CD14-positive monocyte (primary cell): ENCODE measurements at regions of chr1 and their contacts with region 1.

Region 1: DNA sequence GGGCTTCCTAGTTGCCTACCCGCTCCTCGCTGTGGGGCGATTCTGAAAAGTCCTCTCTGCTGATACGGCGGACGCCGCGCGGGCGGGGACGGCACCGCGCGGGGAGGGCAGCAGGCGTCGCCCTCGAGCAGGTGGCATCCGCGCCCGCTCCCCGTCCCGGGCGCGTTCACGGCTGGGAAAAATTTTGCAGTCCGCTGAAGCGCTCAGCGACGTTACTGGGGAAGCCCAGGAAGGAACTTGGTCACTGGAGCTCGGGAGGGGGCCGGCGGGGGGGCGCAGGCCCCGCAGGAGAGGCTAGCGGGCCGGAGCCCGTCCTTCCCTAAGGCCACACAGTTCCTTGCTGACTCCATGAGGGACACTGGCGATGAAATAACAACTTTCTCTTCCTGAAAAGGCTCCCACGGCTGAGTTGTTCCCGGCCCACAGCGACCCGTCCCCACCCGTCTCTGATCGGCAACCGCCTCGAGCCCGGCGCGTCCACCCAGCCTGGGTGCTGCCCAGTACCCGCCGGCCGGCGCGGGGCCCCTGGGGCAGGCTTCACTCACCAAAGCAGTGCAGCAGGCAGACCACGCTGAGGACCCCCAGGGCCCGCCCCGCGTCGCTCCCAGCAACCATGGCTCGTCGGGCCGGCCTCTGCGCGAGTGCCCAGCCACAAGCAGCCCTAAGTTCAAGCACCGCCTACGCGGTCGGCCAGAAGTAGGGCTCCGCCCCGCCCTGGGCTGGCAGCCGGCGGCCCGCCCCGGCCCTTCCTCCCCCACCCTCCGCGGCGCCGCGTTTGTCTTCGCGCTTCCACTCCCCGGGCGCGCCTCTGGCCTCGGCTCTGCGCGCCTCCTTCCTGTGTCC is at the start of gene CD58:
- DNase-seq: peak; percentile 89 to 95 (median 90)
- H3K4me3 ChIP-seq: peak within 1 kb of the TSS; percentile 73 to 84 (median 83)
- H3K4me3 Mint-ChIP-seq: peak within 1 kb of the TSS; percentile 98 to 100
- H3K27ac ChIP-seq: peak within 1 kb of the TSS; percentile 97
- H3K27ac Mint-ChIP-seq: peak within 1 kb of the TSS; percentile 94 to 98 (median 96)
- H3K4me1 ChIP-seq: peaks cover 32 to 57% of the 10 kb centered on the region in 2 donors
- H3K4me1 Mint-ChIP-seq: peaks cover 60% of the 10 kb centered on the region
- H3K27me3 ChIP-seq: no peaks in the 10 kb centered on the region
- H3K27me3 Mint-ChIP-seq: peaks cover 0 to 7% (median 4%) of the 10 kb centered on the region in 3 donors
- CTCF ChIP-seq: peak; percentile 81
- polyA plus RNA-seq, gene CD58: 81.0 to 168 (median 128) TPM

Region 2: GRCh38 chr1:116514708-116515525 is 55.7 kb before region 1 on chr1:
- intact Hi-C with region 1: loop called in 1 of 2 experiments (anchors 2 kb)
- DNase-seq: peak; percentile 97 to 98 (median 98)
- H3K4me3 ChIP-seq: peak overlapping the region in 1 of 3 experiments; percentile 53
- H3K4me3 Mint-ChIP-seq: peak overlapping the region; percentile 60 to 76
- H3K27ac ChIP-seq: peak overlapping the region; percentile 92 to 98
- H3K27ac Mint-ChIP-seq: peak overlapping the region; percentile 99 to 100 (median 100)
- H3K4me1 ChIP-seq: peaks cover 38 to 49% of the 10 kb centered on the region in 2 donors
- H3K4me1 Mint-ChIP-seq: peaks cover 63% of the 10 kb centered on the region
- H3K27me3 ChIP-seq: no peaks in the 10 kb centered on the region
- H3K27me3 Mint-ChIP-seq: peaks cover 0 to 5% (median 0%) of the 10 kb centered on the region in 3 donors
- CTCF ChIP-seq: no peak

Region 3: DNA sequence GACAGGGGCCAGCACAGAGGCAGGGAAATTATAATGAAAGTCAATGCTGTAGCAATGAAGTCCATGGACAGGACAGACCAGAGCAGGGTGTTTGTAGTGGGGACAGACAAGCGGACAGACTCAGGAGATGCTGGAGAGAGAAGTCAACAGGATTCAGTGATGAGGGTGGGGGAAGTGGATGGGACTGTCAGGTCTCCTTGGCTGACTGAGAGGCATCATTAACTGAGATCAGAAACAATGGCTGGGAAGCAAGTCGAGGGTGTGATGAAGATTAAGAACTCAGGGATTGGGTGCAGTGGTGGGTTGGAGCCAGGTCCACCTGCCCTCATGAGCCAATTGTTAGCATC is 25.2 kb before region 1 on chr1:
- intact Hi-C with region 1: no loop called
- DNase-seq: no peak
- H3K4me3 ChIP-seq: no peak overlapping the region
- H3K4me3 Mint-ChIP-seq: peak overlapping the region in 1 of 2 donors; percentile 25
- H3K27ac ChIP-seq: peak overlapping the region in 1 of 2 donors; percentile 59
- H3K27ac Mint-ChIP-seq: peak overlapping the region; percentile 52 to 91 (median 74)
- H3K4me1 ChIP-seq: peaks cover 18 to 19% of the 10 kb centered on the region in 2 donors
- H3K4me1 Mint-ChIP-seq: peaks cover 40% of the 10 kb centered on the region
- H3K27me3 ChIP-seq: no peaks in the 10 kb centered on the region
- H3K27me3 Mint-ChIP-seq: peaks cover 0 to 1% (median under 1%) of the 10 kb centered on the region in 3 donors
- CTCF ChIP-seq: no peak

Region 4: DNA sequence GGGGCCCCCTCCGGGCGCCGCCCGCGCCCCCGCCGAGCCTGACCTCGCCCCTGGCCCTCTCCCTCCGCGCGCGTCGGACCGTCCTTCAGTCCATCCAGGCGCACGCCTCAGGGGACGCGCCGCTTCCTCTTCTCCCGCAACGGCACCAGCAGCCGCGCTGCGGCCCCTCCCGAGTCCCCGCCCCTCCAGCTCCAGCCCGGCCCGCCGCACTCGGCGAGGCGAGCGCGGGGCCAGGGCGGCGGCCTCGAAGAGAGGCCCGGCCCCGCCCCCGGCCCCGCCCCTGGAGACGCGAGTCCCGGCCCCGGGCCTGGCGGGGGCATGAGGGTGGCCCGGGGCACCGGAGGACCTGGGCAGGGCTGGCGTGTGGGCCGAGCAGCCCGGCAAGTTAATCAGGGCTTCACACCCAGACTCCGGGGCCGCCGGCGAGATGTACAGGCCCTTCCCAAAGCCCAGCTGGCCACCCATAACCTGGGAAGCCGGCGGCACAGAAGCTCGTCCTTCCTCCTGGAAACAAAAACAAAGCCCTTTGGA is 97.1 kb after region 1 on chr1 and contains the start of gene IGSF3:
- intact Hi-C with region 1: loop called (anchors 5 to 10 kb)
- DNase-seq: peak; percentile 68 to 72 (median 68)
- H3K4me3 ChIP-seq: peak within 1 kb of the TSS; percentile 10 to 80 (median 26)
- H3K4me3 Mint-ChIP-seq: peak within 1 kb of the TSS; percentile 77 to 92
- H3K27ac ChIP-seq: no peak within 1 kb of the TSS
- H3K27ac Mint-ChIP-seq: peak within 1 kb of the TSS in 1 of 7 donors; percentile 86
- H3K4me1 ChIP-seq: peaks cover 17 to 22% of the 10 kb centered on the region in 2 donors
- H3K4me1 Mint-ChIP-seq: peaks cover 25% of the 10 kb centered on the region
- H3K27me3 ChIP-seq: peaks cover 27 to 54% of the 10 kb centered on the region in 2 donors
- H3K27me3 Mint-ChIP-seq: peaks cover 55 to 63% (median 56%) of the 10 kb centered on the region in 3 donors
- CTCF ChIP-seq: no peak
- polyA plus RNA-seq, gene IGSF3: 0.07 to 0.12 TPM in 2 of 3 donors, not detected in the other

Region 5: DNA sequence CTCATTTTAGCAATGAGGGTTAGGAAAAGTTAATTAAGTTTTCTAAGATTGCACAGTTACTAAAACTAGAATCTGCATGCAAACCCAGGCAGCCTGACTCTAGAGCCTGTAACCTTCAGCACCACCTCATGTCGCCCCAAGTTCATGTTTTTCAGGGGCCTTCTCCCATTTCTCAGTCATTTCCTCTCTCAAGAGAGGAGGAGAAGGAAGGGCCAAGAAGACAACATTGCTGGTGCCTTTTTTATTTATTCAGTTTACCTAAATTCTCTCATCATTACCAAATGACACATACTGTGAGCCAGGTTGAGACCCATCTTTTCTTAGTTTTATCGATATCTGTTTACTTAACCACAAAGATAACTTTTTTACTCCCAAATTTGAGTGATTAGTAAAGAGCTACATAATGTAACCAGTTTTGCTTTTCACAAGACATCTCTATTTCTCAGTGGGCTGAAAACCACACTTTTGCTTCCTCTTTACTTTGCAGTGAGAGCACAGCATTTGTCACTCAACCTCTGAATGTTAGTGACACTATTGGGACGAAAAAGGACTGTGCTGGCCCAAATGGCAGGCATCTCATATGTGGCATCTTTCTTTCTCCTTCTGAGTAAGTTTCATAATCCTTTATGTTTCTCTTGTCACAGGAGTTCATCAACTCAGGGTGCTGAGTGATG is 430.8 kb after region 1 on chr1 and contains the start of gene CD101:
- intact Hi-C with region 1: loop called in 1 of 2 experiments (anchors 10 kb)
- DNase-seq: peak; percentile 76 to 89 (median 80)
- H3K4me3 ChIP-seq: peak within 1 kb of the TSS; percentile 31 to 75 (median 40)
- H3K4me3 Mint-ChIP-seq: peak within 1 kb of the TSS; percentile 39 to 87
- H3K27ac ChIP-seq: peak within 1 kb of the TSS; percentile 57 to 92
- H3K27ac Mint-ChIP-seq: peak within 1 kb of the TSS; percentile 91 to 99 (median 94)
- H3K4me1 ChIP-seq: peaks cover 65 to 91% of the 10 kb centered on the region in 2 donors
- H3K4me1 Mint-ChIP-seq: peaks cover 82% of the 10 kb centered on the region
- H3K27me3 ChIP-seq: no peaks in the 10 kb centered on the region
- H3K27me3 Mint-ChIP-seq: peaks cover 0 to 7% (median 2%) of the 10 kb centered on the region in 3 donors
- CTCF ChIP-seq: no peak
- polyA plus RNA-seq, gene CD101: 27.2 to 101 (median 54.7) TPM